PC-3 (cell line): ENCODE measurements at regions of chr1 and their contacts with region 1.

Region 1: GRCh38 chr1:240691521-240692338 is 79.8 kb upstream of the GREM2 start:
- DNase-seq: peak; percentile 78
- ATAC-seq: peak; percentile 89
- H3K4me3 ChIP-seq: 0 out of 2 replicates have a peak overlapping the region, but pooled peaks have one; percentile 5
- H3K27ac ChIP-seq: no peak overlapping the region
- H3K4me1 ChIP-seq: peaks cover 16% of the 10 kb centered on the region; the same call in 1 of the 2 replicates
- H3K27me3 ChIP-seq: peaks cover 46% of the 10 kb centered on the region
- CTCF ChIP-seq: peak; percentile 92

Region 2: GRCh38 chr1:240021709-240022108 is 670.0 kb before region 1 on chr1:
- CTCF ChIA-PET with region 1: no interaction called
- POLR2A ChIA-PET with region 1: no interaction called
- intact Hi-C with region 1: loop called (anchors 5 kb)
- DNase-seq: no peak
- ATAC-seq: no peak
- H3K4me3 ChIP-seq: no peak overlapping the region
- H3K27ac ChIP-seq: no peak overlapping the region
- H3K4me1 ChIP-seq: no peaks in the 10 kb centered on the region
- H3K27me3 ChIP-seq: no peaks in the 10 kb centered on the region
- CTCF ChIP-seq: no peak

Region 3: GRCh38 chr1:240435968-240436566 is 255.7 kb before region 1 on chr1:
- CTCF ChIA-PET with region 1: no interaction called
- POLR2A ChIA-PET with region 1: no interaction called
- intact Hi-C with region 1: no loop called
- DNase-seq: peak; percentile 74
- ATAC-seq: peak; percentile 98
- H3K4me3 ChIP-seq: no peak overlapping the region
- H3K27ac ChIP-seq: no peak overlapping the region
- H3K4me1 ChIP-seq: peaks cover 12% of the 10 kb centered on the region
- H3K27me3 ChIP-seq: no peaks in the 10 kb centered on the region
- CTCF ChIP-seq: no peak

Region 4: DNA sequence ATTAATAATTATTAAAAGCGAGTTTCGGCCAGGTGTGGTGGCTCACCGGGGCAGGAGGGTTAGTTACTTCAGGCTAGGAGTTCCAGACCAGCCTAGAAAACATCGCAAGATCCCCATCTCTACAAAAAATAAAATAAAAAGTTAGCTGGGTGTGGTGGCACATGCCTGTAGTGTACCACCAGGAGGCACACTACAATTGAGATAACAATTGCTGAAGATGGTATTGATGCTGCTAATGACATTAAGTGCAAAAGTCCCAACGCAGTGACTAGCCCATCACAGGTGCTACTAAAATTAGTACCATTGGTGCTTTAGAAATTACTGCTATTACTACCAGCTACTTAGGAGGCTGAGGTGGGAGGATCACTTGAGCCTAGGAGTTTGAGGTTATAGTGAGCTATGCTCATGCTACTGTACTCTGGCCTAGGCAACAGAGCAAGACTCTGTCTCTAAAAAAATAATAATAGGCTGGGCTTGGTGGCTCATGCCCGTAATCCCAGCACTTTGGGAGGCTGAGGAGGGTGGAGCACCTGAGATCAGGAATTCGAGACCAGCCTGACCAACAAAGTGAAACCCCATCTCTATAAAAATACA is 236.4 kb before region 1 on chr1:
- CTCF ChIA-PET with region 1: interaction called, 5 read pairs
- POLR2A ChIA-PET with region 1: no interaction called
- intact Hi-C with region 1: loop called (anchors 1 kb)
- DNase-seq: peak; percentile 54
- ATAC-seq: peak; percentile 77
- H3K4me3 ChIP-seq: no peak overlapping the region
- H3K27ac ChIP-seq: no peak overlapping the region
- H3K4me1 ChIP-seq: no peaks in the 10 kb centered on the region
- H3K27me3 ChIP-seq: no peaks in the 10 kb centered on the region
- CTCF ChIP-seq: peak; percentile 82

Region 5: DNA sequence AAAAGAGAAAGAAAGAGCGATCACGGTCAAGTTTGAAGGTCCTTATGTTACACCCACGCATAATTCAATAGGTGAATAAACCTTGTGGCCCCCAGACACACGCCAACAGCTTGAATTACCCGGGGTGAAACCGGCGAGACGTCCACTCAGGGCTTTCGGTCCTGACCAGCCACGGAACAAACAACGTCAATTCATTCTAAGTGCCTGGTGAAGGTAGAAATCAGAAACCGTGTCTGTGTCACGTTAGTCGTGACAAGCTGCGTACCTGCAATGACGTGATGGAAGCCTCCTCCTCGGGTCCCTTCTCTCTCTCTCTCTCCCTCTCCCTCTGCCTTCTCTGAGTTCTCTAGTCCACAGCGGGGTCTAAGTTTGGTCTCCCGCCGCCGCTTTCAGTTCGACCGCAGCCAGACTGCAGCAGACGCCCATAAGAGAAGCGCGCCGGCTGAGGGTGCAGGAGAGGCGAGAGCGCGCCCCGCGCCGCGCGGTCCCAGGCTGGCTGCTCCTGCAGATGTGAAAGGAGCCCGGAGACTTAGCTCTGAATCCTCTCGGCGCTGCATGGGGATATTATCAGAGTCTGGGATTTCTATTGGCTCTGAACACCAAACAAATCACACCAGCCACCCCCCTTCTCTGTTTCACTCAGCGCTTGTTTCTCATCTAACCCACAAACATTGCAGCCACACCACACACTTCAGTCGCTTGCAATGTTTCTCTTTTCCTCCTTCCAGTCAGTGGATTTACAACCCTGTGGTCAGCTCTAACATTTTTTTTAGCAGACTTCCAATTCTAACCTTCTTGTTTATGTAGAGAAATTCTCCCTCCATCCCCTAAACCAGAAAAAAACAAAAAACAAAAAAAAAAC is 79.9 kb before region 1 on chr1 and contains the start of gene GREM2:
- CTCF ChIA-PET with region 1: no interaction called
- POLR2A ChIA-PET with region 1: no interaction called
- intact Hi-C with region 1: loop called (anchors 5 kb)
- DNase-seq: peak; percentile 40
- ATAC-seq: peak; percentile 75
- H3K4me3 ChIP-seq: peak within 1 kb of the TSS; percentile 68
- H3K27ac ChIP-seq: no peak within 1 kb of the TSS
- H3K4me1 ChIP-seq: peaks cover 10% of the 10 kb centered on the region; the same call in 1 of the 2 replicates
- H3K27me3 ChIP-seq: peaks cover 72% of the 10 kb centered on the region
- CTCF ChIP-seq: no peak
- total RNA-seq, gene GREM2: not detected in 2 replicates